ENCODE measurements at regions of chr11 and their contacts with region 1.

Region 1: GRCh38 chr11:58567889-58568512 is 7.7 kb downstream of the LPXN start:
- H3K4me3 Mint-ChIP-seq: no peak overlapping the region
- H3K27ac Mint-ChIP-seq: no peak overlapping the region
- H3K4me1 Mint-ChIP-seq: peaks cover 51% of the 10 kb centered on the region
- H3K27me3 Mint-ChIP-seq: no peaks in the 10 kb centered on the region

Region 2: DNA sequence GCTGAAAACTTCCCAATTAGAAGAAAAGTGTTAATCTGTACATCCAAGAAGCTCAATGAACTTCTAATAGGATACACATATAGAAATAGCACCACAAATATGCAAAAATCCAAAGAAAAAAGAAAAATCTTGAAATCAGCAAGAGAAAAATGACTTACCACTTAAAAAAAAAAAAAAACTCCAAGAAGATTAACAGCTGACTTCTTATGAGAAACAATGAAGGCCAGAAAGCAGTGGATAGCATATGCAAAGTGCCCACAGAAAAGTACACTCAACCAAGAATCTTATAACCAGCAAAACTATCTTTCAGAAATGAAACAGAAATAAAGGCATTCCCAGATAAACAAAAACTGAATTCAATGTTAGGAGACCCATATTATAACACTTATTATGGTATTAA is 96.1 kb before region 1 on chr11:
- intact Hi-C with region 1: no loop called
- H3K4me3 Mint-ChIP-seq: no peak overlapping the region
- H3K27ac Mint-ChIP-seq: no peak overlapping the region
- H3K4me1 Mint-ChIP-seq: no peaks in the 10 kb centered on the region
- H3K27me3 Mint-ChIP-seq: no peaks in the 10 kb centered on the region

Region 3: DNA sequence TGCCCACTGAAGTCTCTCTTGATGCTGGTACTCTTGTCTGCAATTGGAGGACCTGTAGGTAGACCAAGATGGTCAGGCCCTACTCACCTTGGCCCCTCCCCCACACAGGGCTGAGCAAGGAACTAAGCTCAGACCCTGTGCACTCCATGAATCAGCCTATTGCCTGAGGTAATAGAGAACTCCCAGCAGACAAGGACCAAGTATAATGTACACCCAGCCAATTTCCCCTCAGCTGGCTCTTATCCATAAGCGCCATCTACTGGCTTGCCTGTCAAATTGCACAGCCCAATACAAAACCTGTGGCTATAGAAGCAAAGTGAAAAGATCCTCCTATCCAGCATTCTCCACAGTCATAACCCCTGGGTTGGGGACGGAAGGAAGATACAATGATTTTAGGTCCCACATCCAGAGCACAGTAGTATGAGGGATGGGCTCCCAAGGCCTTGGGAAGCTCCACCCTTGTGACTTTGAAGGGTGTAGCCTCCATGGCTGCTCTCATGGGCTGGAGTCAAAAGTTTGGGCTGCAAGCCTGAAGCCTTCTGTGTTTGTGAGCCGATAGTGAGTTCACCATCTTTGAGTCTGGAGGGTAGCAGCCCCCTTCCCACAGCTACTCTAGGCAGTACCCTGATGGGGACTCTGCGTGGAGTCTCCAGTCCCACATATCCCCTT is 220.5 kb after region 1 on chr11:
- intact Hi-C with region 1: loop called (anchors 5 kb)
- H3K4me3 Mint-ChIP-seq: no peak overlapping the region
- H3K27ac Mint-ChIP-seq: no peak overlapping the region
- H3K4me1 Mint-ChIP-seq: no peaks in the 10 kb centered on the region
- H3K27me3 Mint-ChIP-seq: peaks cover 2% of the 10 kb centered on the region

Measured in dendritic cell treated with granulocyte-macrophage colony-stimulating factor and Interleukin-4, amounts not matched to agents 40 ng/mL and 50 ng/mL, for 4 days (primary cell).